CD4-positive, alpha-beta T cell (primary cell): ENCODE measurements at regions of chr13 and their contacts with region 1.

Region 1: DNA sequence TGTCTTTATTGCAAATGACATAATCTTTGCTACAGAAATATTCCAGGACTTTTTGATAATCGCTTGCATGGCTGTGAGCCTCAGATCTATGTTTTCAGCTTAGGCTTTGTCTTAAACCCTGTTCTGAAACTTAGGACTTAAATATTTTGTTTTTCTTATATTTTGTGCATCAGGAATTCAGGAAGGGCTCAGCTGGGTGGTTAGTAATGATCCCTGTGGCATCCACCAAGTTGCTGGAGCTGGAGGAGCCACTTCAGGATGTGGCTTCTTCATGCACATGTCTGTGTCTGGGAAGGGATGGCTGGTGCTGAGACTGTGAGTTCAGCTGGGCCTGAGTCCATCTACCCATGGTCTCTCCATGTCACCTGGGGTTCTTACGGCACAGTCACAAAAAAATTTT is 48.9 kb upstream of the LRCH1 start:
- DNase-seq: no peak
- ATAC-seq: no peak
- H3K4me3 ChIP-seq: no peak overlapping the region
- H3K4me3 Mint-ChIP-seq: no peak overlapping the region
- H3K27ac ChIP-seq: no peak overlapping the region
- H3K27ac Mint-ChIP-seq: no peak overlapping the region
- H3K4me1 ChIP-seq: no peaks in the 10 kb centered on the region
- H3K4me1 Mint-ChIP-seq: no peaks in the 10 kb centered on the region
- H3K27me3 ChIP-seq: no peaks in the 10 kb centered on the region
- H3K27me3 Mint-ChIP-seq: peaks cover 4% of the 10 kb centered on the region
- CTCF ChIP-seq: no peak

Region 2: GRCh38 chr13:46484561-46484960 is 19.5 kb before region 1 on chr13:
- CTCF ChIA-PET with region 1: no interaction called
- POLR2A ChIA-PET with region 1: no interaction called
- intact Hi-C with region 1: loop called in 1 of 2 experiments (anchors 2 kb)
- DNase-seq: no peak
- ATAC-seq: no peak
- H3K4me3 ChIP-seq: no peak overlapping the region
- H3K4me3 Mint-ChIP-seq: no peak overlapping the region
- H3K27ac ChIP-seq: no peak overlapping the region
- H3K27ac Mint-ChIP-seq: no peak overlapping the region
- H3K4me1 ChIP-seq: no peaks in the 10 kb centered on the region
- H3K4me1 Mint-ChIP-seq: no peaks in the 10 kb centered on the region
- H3K27me3 ChIP-seq: peaks cover 0 to 4% of the 10 kb centered on the region in 2 experiments
- H3K27me3 Mint-ChIP-seq: no peaks in the 10 kb centered on the region
- CTCF ChIP-seq: no peak

Region 3: GRCh38 chr13:46529216-46529919 is 25.3 kb after region 1 on chr13:
- CTCF ChIA-PET with region 1: no interaction called
- POLR2A ChIA-PET with region 1: no interaction called
- intact Hi-C with region 1: no loop called
- DNase-seq: no peak
- ATAC-seq: no peak
- H3K4me3 ChIP-seq: no peak overlapping the region
- H3K4me3 Mint-ChIP-seq: no peak overlapping the region
- H3K27ac ChIP-seq: no peak overlapping the region
- H3K27ac Mint-ChIP-seq: no peak overlapping the region
- H3K4me1 ChIP-seq: no peaks in the 10 kb centered on the region
- H3K4me1 Mint-ChIP-seq: no peaks in the 10 kb centered on the region
- H3K27me3 ChIP-seq: no peaks in the 10 kb centered on the region
- H3K27me3 Mint-ChIP-seq: no peaks in the 10 kb centered on the region
- CTCF ChIP-seq: no peak